Psoas muscle (tissue), 8 donors: ENCODE measurements at regions of chr14 and their contacts with region 1.

Region 1: DNA sequence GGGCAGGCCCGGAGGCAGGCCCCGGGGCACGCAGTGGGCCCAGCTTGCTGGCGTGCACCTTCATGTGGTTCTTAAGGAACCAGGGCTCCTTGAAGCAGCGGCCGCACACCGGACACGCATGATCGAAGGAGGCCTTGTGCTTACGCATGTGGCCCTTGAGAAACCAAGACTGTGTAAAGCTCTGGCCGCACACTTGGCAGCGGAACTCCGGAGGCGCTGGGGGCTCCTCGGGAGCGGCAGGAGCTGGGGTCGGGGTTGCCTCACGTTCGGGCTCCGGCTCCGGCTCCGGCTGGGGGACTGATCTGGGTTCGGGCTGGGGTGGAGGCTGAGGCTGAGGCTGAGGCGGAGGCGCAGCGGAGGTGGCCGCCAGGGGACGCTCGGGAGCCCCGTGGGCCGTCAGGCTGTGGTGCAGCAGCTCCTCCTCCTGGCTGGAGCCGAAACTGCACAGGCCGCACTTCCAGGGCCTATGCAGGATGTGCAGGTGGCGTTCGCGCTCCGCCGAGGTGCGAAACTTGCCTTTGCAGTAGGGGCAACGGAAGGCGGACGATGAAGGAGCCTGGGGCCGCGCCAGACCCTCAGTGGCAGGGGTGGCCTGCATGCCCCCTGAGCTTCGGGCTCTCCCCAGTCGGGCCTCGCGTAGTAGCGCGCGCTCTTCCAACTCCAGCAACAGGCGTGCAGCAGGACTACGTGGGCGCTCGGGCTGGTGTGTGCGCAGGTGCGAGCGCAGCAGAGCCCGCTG is 6.0 kb downstream of the ZNF219 start:
- DNase-seq: peak; percentile 83 to 92
- ATAC-seq: peak; percentile 91 to 95 (median 92)
- H3K4me3 ChIP-seq: no peak overlapping the region
- H3K27ac ChIP-seq: no peak overlapping the region
- H3K4me1 ChIP-seq: peaks cover 4% of the 10 kb centered on the region
- H3K27me3 ChIP-seq: no peaks in the 10 kb centered on the region
- CTCF ChIP-seq: peak; percentile 100

Region 2: DNA sequence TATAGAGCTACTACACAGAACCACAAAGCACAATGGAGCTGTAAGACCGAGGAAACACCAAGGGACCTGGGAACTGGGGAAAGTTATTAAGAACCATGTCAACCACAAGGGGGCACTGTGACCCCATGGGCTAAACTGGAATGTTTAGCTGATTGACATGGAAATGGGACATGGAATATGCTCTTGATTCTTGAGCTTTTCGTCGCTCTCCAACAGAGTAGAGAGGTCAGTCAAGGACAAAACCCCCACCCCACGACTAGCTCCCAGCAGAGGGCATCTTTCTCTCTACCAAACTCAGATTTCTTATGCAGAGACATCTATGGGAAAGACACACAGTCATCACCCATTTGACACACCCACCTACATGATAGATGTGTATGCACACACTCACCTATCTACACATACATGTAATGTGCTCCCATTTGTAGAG is 77.7 kb before region 1 on chr14:
- intact Hi-C with region 1: loop called in 1 of 2 experiments (anchors 5 kb)
- DNase-seq: peak; percentile 81 to 90
- ATAC-seq: peak; percentile 74 to 86 (median 82)
- H3K4me3 ChIP-seq: peak overlapping the region; percentile 23
- H3K27ac ChIP-seq: peak overlapping the region; percentile 63
- H3K4me1 ChIP-seq: peaks cover 54% of the 10 kb centered on the region
- H3K27me3 ChIP-seq: no peaks in the 10 kb centered on the region
- CTCF ChIP-seq: peak; percentile 99

Region 3: DNA sequence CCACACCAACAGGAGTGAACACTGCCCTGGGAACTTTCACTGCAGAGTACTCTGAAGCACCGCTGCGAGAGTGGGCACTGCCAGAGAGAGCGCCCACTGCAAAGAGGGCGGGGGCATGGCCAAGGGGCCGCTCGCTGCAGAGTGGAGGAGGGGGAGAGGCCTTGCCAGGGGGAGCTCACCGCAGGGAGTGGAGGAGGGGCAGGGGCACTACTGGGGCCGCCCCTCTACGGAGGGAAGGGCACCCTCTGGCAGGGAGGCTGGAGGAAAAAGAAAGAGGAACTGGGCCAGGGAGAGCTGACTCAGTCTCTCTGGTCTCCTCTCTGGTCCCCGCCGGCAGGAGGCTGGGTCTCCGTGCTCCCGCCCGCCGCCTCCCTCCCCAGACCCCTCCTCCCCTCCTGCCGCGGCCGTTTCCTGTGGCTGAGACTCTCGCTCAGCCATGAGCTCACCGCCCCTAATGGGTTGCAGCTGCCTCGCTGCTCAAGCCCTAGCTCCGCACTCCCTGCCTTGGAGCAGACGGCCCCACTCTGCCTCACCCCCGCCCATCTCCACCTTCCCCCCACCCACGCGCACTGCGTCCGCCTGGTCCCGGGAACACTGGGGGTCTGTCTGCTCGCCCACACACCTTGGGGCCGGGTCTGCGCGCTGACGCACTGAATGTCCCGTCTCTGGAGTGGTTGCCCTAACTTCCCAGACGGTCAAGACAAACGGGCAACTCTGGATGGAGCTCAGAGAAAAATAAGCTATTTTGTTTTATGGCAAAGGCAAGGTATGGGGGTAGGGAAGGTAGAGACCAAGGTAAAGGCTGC is 21.0 kb before region 1 on chr14:
- intact Hi-C with region 1: loop called in 1 of 2 experiments (anchors 2 kb)
- DNase-seq: peak; percentile 88 to 90
- ATAC-seq: peak; percentile 60 to 77 (median 62)
- H3K4me3 ChIP-seq: peak overlapping the region; percentile 83
- H3K27ac ChIP-seq: peak overlapping the region; percentile 84
- H3K4me1 ChIP-seq: peaks cover 18% of the 10 kb centered on the region
- H3K27me3 ChIP-seq: no peaks in the 10 kb centered on the region
- CTCF ChIP-seq: peak; percentile 6

Region 4: DNA sequence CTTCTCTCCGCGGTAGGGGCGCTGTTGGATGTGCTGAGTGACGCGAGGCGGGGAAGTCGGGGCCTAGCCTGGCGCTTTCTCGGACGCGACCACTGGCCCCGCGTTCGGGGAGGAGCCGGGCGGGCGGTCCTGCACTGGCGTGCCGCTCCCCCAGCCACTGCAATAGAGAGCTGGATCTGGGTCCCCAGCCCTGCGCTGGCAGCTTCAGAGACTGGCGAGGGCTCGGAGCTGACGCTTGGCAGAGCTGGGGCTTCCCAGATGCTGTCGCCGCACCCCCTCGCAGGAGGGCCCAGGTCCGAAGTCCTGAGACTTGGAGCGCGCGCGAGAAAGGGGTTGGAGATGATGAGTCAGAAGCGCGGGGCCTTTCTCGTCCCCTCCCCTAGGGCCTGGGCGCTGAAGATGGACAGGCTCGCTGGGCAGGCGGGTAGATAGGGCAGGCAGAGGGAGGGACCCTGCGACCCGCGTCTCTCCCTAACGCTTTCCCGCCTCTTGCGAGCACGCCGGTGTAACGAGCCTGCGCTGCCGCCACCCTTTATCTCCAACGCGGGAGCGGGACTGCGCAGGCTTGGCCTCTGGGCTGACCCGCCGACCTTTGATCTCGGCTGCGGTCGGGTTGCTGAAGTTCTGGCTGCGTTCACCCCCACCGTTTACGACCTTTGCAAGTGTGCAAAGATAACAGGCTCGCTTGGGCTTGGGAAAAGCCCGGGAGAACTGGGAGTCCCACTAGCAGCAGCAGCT is 11.4 kb after region 1 on chr14:
- intact Hi-C with region 1: no loop called
- DNase-seq: peak; percentile 96 to 98
- ATAC-seq: peak; percentile 93 to 97 (median 96)
- H3K4me3 ChIP-seq: peak overlapping the region; percentile 94
- H3K27ac ChIP-seq: peak overlapping the region; percentile 100
- H3K4me1 ChIP-seq: peaks cover 38% of the 10 kb centered on the region
- H3K27me3 ChIP-seq: no peaks in the 10 kb centered on the region
- CTCF ChIP-seq: peak; percentile 77